ENCODE measurements at regions of chr4 and their contacts with region 1.

Region 1: DNA sequence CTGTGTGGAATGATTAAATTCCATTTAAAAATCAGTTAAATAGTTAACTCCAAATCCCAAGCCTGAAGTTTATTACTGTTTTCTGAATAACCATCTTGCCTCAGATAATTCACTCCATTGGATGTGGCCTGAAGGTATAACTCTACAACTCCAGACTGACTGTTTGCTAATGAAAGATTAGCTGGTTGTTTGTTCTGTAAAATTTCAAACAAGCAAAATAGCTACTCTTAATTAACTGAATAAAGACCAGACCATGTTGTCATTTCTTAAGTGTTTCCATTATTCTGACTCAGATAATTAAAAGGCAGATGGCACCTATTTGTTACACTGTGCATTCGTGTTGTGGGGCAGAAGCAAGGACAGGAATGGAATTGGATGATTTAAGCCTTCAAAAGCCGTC is 78.5 kb upstream of the DDIT4L start:
- DNase-seq: no peak
- ATAC-seq: no peak
- H3K4me3 ChIP-seq: no peak overlapping the region
- H3K4me3 Mint-ChIP-seq: no peak overlapping the region
- H3K27ac ChIP-seq: no peak overlapping the region
- H3K27ac Mint-ChIP-seq: no peak overlapping the region
- H3K4me1 ChIP-seq: no peaks in the 10 kb centered on the region
- H3K4me1 Mint-ChIP-seq: no peaks in the 10 kb centered on the region
- H3K27me3 ChIP-seq: peaks cover 0 to 9% of the 10 kb centered on the region in 2 experiments
- H3K27me3 Mint-ChIP-seq: peaks cover 0 to 10% of the 10 kb centered on the region in 2 donors

Region 2: DNA sequence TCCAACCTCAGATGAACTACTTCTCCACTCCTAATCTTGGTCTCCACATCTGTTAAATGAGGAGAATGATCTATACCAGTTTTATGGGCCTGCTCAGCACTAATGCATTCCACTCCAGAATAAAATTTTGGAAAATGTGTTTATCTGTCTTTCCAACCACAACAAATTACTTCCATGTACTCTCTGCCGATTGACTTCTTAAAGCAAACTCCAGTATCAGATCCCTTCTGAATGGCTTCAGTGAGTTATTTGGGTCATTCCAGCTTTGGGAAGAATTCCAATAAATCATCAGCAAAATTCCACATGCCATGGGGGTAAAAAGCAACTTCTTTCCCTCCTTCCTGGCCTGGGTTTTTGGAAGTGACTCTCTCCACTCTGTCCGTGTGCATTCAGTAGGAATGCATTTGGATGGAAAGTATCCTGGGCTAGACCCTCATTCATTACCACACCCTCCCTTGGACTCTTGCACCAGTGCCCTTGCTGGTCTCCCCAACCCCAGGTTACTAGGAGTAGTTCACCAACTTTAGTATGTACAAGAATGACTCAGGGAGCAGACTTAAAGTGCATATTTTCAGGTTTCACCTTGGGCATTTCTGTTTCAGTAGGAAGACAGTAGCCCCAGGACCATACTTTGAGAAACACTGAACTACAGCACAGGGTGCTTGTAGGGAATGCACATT is 1034.3 kb before region 1 on chr4:
- CTCF ChIA-PET with region 1: no interaction called
- POLR2A ChIA-PET with region 1: no interaction called
- DNase-seq: no peak
- ATAC-seq: no peak
- H3K4me3 ChIP-seq: no peak overlapping the region
- H3K4me3 Mint-ChIP-seq: no peak overlapping the region
- H3K27ac ChIP-seq: no peak overlapping the region
- H3K27ac Mint-ChIP-seq: no peak overlapping the region
- H3K4me1 ChIP-seq: no peaks in the 10 kb centered on the region
- H3K4me1 Mint-ChIP-seq: no peaks in the 10 kb centered on the region
- H3K27me3 ChIP-seq: no peaks in the 10 kb centered on the region
- H3K27me3 Mint-ChIP-seq: peaks cover 0 to 7% of the 10 kb centered on the region in 2 donors

Region 3: GRCh38 chr4:100240008-100240407 is 28.8 kb before region 1 on chr4:
- CTCF ChIA-PET with region 1: no interaction called
- POLR2A ChIA-PET with region 1: no interaction called
- DNase-seq: no peak
- ATAC-seq: no peak
- H3K4me3 ChIP-seq: no peak overlapping the region
- H3K4me3 Mint-ChIP-seq: no peak overlapping the region
- H3K27ac ChIP-seq: no peak overlapping the region
- H3K27ac Mint-ChIP-seq: no peak overlapping the region
- H3K4me1 ChIP-seq: no peaks in the 10 kb centered on the region
- H3K4me1 Mint-ChIP-seq: peaks cover 0 to 5% (median 0%) of the 10 kb centered on the region in 3 donors
- H3K27me3 ChIP-seq: peaks cover 0 to 2% of the 10 kb centered on the region in 2 experiments
- H3K27me3 Mint-ChIP-seq: peaks cover 0 to 4% of the 10 kb centered on the region in 2 donors

Region 4: GRCh38 chr4:101699441-101700124 is 1430.8 kb after region 1 on chr4:
- CTCF ChIA-PET with region 1: no interaction called
- POLR2A ChIA-PET with region 1: interaction called in 1 of 2 experiments, 11 read pairs
- DNase-seq: no peak
- ATAC-seq: no peak
- H3K4me3 ChIP-seq: no peak overlapping the region
- H3K4me3 Mint-ChIP-seq: peak overlapping the region in 1 of 3 donors; percentile 13
- H3K27ac ChIP-seq: no peak overlapping the region
- H3K27ac Mint-ChIP-seq: no peak overlapping the region
- H3K4me1 ChIP-seq: no peaks in the 10 kb centered on the region
- H3K4me1 Mint-ChIP-seq: peaks cover 0 to 2% (median 0%) of the 10 kb centered on the region in 3 donors
- H3K27me3 ChIP-seq: no peaks in the 10 kb centered on the region
- H3K27me3 Mint-ChIP-seq: peaks cover 0 to 7% of the 10 kb centered on the region in 2 donors

Measured in T-cell (primary cell).